Mammary epithelial cell (primary cell): ENCODE measurements at regions of chr2 and their contacts with region 1.

Region 1: GRCh38 chr2:239523954-239524330 is 123.1 kb upstream of the HDAC4 start:
- DNase-seq: no peak
- H3K4me3 ChIP-seq: no peak overlapping the region
- H3K27ac ChIP-seq: no peak overlapping the region
- H3K4me1 ChIP-seq: no peaks in the 10 kb centered on the region
- H3K27me3 ChIP-seq: no peaks in the 10 kb centered on the region
- CTCF ChIP-seq: no peak

Region 2: GRCh38 chr2:237886685-237887481 is 1637.1 kb before region 1 on chr2:
- CTCF ChIA-PET with region 1: no interaction called
- dilution Hi-C with region 1: no loop called
- in situ Hi-C with region 1: no loop called
- intact Hi-C with region 1: no loop called
- DNase-seq: no peak
- H3K4me3 ChIP-seq: no peak overlapping the region
- H3K27ac ChIP-seq: no peak overlapping the region
- H3K4me1 ChIP-seq: no peaks in the 10 kb centered on the region
- H3K27me3 ChIP-seq: no peaks in the 10 kb centered on the region
- CTCF ChIP-seq: no peak

Region 3: DNA sequence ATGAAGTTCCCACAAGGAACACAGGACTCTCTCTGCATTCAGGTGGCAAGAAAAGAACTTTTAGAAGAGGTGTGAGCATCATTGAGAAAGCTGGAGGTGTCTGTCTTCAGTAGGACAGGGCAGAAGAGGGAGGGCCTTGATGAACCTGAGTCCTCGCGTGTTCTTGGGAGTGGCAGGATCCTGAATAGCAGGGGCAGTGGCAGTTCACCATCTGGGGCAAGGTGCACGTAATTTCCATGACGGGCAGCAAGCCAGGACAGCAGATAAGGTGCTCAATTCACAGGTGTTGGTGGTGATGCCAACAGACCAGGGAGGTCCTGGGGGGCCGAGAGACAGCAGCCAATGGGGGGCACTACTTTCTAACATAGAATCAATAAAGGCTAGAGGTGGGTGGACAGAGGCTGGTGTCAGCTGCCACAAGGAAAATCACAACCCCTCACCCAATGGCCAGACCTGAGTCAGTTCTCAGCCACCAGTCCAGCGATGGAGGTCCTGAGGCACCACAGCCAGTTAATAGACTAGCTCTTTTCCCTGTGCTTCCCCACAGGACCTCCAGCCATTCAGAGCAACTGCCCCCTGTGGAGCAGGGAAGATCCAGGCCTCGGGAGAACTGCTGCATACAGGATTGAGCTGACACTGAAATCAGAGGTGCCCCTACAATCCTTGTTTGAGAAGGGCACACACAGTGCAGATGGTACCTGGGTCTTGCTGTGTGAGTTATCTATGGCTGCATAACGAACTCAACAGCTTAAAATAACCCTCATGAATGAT is 112.2 kb before region 1 on chr2:
- CTCF ChIA-PET with region 1: no interaction called
- dilution Hi-C with region 1: loop called (anchors 5 kb)
- in situ Hi-C with region 1: no loop called
- intact Hi-C with region 1: no loop called
- DNase-seq: no peak
- H3K4me3 ChIP-seq: no peak overlapping the region
- H3K27ac ChIP-seq: no peak overlapping the region
- H3K4me1 ChIP-seq: no peaks in the 10 kb centered on the region
- H3K27me3 ChIP-seq: peaks cover 2% of the 10 kb centered on the region
- CTCF ChIP-seq: no peak

Region 4: GRCh38 chr2:239465017-239466001 is 58.6 kb before region 1 on chr2:
- CTCF ChIA-PET with region 1: no interaction called
- dilution Hi-C with region 1: loop called (anchors 5 kb)
- in situ Hi-C with region 1: no loop called
- intact Hi-C with region 1: no loop called
- DNase-seq: peak; percentile 19
- H3K4me3 ChIP-seq: no peak overlapping the region
- H3K27ac ChIP-seq: no peak overlapping the region
- H3K4me1 ChIP-seq: no peaks in the 10 kb centered on the region
- H3K27me3 ChIP-seq: no peaks in the 10 kb centered on the region
- CTCF ChIP-seq: no peak

Region 5: GRCh38 chr2:239569401-239570090 is 45.6 kb after region 1 on chr2:
- CTCF ChIA-PET with region 1: no interaction called
- dilution Hi-C with region 1: loop called (anchors 5 kb)
- in situ Hi-C with region 1: no loop called
- intact Hi-C with region 1: no loop called
- DNase-seq: no peak
- H3K4me3 ChIP-seq: no peak overlapping the region
- H3K27ac ChIP-seq: no peak overlapping the region
- H3K4me1 ChIP-seq: no peaks in the 10 kb centered on the region
- H3K27me3 ChIP-seq: no peaks in the 10 kb centered on the region
- CTCF ChIP-seq: no peak

Region 6: GRCh38 chr2:239594773-239595608 is 71.0 kb after region 1 on chr2:
- CTCF ChIA-PET with region 1: no interaction called
- dilution Hi-C with region 1: loop called (anchors 5 kb)
- in situ Hi-C with region 1: no loop called
- intact Hi-C with region 1: no loop called
- DNase-seq: no peak
- H3K4me3 ChIP-seq: no peak overlapping the region
- H3K27ac ChIP-seq: no peak overlapping the region
- H3K4me1 ChIP-seq: no peaks in the 10 kb centered on the region
- H3K27me3 ChIP-seq: no peaks in the 10 kb centered on the region
- CTCF ChIP-seq: no peak